ENCODE measurements at regions of chr1 and their contacts with region 1.

Region 1: GRCh38 chr1:233598891-233599541 is 14.9 kb upstream of the KCNK1 start:
- DNase-seq: peak; percentile 69
- ATAC-seq: peak; percentile 82
- H3K4me3 Mint-ChIP-seq: no peak overlapping the region
- H3K27ac Mint-ChIP-seq: peak overlapping the region; percentile 78
- H3K4me1 Mint-ChIP-seq: peaks cover 31% of the 10 kb centered on the region
- H3K27me3 Mint-ChIP-seq: peaks cover 15% of the 10 kb centered on the region

Region 2: DNA sequence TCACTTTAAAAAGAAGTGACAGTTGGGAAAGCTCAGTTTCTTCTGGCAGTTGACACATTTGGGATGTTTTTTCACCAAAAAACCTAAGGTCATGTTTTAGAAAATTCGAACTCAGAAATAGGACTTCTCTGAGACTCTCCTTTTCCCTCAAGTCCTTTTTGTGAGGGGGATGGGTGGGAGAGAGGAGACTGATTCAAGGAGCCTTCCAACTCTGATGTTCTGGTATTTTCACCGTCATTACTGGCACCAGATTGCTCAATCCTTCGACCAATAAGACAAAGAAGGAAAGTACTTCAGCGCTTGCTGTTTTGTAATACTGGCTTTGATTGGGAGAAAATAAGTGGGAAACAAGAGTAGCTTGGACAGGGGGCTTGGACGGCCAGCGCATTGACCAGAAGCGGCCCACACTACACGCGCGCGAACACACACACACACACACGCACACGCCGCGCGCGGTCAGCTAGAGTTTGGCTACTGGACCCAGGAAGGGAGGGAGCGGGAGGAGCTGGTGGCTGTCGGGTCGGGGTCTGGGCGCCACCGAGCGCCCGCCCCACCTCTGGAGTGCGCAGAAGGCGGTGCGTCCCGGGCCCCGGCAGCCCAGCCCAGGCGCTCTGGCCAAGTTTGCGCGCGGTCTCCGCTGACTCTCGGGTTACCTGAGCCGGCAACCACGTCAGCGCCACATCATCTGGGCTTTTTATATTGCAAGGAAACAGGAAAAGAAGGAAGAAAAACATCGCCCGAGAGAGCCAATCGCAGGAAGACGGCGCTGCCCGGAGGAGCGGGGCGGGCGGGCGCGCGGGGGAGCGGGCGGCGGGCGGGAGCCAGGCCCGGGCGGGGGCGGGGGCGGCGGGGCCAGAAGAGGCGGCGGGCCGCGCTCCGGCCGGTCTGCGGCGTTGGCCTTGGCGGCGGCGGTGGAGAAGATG is 14.5 kb after region 1 on chr1 and contains the start of gene KCNK1:
- CTCF ChIA-PET with region 1: no interaction called
- POLR2A ChIA-PET with region 1: no interaction called
- intact Hi-C with region 1: loop called in 1 of 2 experiments (anchors 2 kb)
- DNase-seq: peak; percentile 34
- ATAC-seq: peak; percentile 23
- H3K4me3 Mint-ChIP-seq: peak within 1 kb of the TSS; percentile 55
- H3K27ac Mint-ChIP-seq: peak within 1 kb of the TSS; percentile 53
- H3K4me1 Mint-ChIP-seq: peaks cover 10% of the 10 kb centered on the region
- H3K27me3 Mint-ChIP-seq: peaks cover 62% of the 10 kb centered on the region
- total RNA-seq, gene KCNK1: 0.91 to 1.1 TPM

Region 3: DNA sequence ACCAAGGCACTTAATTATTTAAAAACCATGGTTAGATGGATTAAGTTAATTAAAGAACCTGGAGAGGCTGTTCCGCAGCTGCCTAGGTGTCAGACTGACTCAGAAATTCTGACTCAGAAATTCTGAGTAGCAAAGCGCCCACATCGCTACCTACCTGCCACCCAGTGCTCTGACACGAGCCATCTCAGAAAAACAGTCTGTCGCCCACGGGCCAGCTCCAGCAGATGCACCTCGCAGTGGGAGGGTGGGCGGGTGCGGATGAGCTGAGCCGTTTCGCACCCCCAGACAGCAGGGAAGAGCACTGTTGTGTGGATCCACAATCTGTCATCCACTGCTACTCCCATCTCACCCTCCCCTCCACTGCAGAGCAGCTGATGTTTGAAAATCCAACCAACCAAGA is 28.4 kb after region 1 on chr1:
- CTCF ChIA-PET with region 1: no interaction called
- POLR2A ChIA-PET with region 1: no interaction called
- intact Hi-C with region 1: loop called in 1 of 2 experiments (anchors 2 kb)
- DNase-seq: peak; percentile 71
- ATAC-seq: peak; percentile 83
- H3K4me3 Mint-ChIP-seq: no peak overlapping the region
- H3K27ac Mint-ChIP-seq: no peak overlapping the region
- H3K4me1 Mint-ChIP-seq: peaks cover 8% of the 10 kb centered on the region
- H3K27me3 Mint-ChIP-seq: peaks cover 11% of the 10 kb centered on the region

Region 4: GRCh38 chr1:233668725-233669294 is 69.8 kb after region 1 on chr1:
- CTCF ChIA-PET with region 1: no interaction called
- POLR2A ChIA-PET with region 1: no interaction called
- intact Hi-C with region 1: loop called in 1 of 2 experiments (anchors 2 kb)
- DNase-seq: peak; percentile 17
- ATAC-seq: peak; percentile 86
- H3K4me3 Mint-ChIP-seq: no peak overlapping the region
- H3K27ac Mint-ChIP-seq: no peak overlapping the region
- H3K4me1 Mint-ChIP-seq: peaks cover 2% of the 10 kb centered on the region
- H3K27me3 Mint-ChIP-seq: peaks cover 17% of the 10 kb centered on the region

Measured in activated CD4-positive, alpha-beta T cell treated with anti-CD3 and anti-CD28 coated beads for 36 hours (primary cell).